ENCODE measurements at regions of chr1 and their contacts with region 1.

Region 1: GRCh38 chr1:66436378-66437145 is 97.4 kb upstream of the SGIP1 start:
- DNase-seq: peak; percentile 62
- H3K4me3 Mint-ChIP-seq: no peak overlapping the region
- H3K27ac Mint-ChIP-seq: peak overlapping the region; percentile 57
- H3K4me1 Mint-ChIP-seq: peaks cover 44% of the 10 kb centered on the region
- H3K27me3 Mint-ChIP-seq: no peaks in the 10 kb centered on the region

Region 2: GRCh38 chr1:66119148-66119547 is 317.4 kb before region 1 on chr1:
- CTCF ChIA-PET with region 1: no interaction called
- POLR2A ChIA-PET with region 1: no interaction called
- DNase-seq: no peak
- H3K4me3 Mint-ChIP-seq: no peak overlapping the region
- H3K27ac Mint-ChIP-seq: no peak overlapping the region
- H3K4me1 Mint-ChIP-seq: no peaks in the 10 kb centered on the region
- H3K27me3 Mint-ChIP-seq: peaks cover 11% of the 10 kb centered on the region

Region 3: GRCh38 chr1:66253330-66253921 is 183.1 kb before region 1 on chr1:
- CTCF ChIA-PET with region 1: interaction called, 422 read pairs
- POLR2A ChIA-PET with region 1: interaction called, 5 read pairs
- DNase-seq: no peak
- H3K4me3 Mint-ChIP-seq: no peak overlapping the region
- H3K27ac Mint-ChIP-seq: no peak overlapping the region
- H3K4me1 Mint-ChIP-seq: peaks cover 74% of the 10 kb centered on the region
- H3K27me3 Mint-ChIP-seq: no peaks in the 10 kb centered on the region

Region 4: DNA sequence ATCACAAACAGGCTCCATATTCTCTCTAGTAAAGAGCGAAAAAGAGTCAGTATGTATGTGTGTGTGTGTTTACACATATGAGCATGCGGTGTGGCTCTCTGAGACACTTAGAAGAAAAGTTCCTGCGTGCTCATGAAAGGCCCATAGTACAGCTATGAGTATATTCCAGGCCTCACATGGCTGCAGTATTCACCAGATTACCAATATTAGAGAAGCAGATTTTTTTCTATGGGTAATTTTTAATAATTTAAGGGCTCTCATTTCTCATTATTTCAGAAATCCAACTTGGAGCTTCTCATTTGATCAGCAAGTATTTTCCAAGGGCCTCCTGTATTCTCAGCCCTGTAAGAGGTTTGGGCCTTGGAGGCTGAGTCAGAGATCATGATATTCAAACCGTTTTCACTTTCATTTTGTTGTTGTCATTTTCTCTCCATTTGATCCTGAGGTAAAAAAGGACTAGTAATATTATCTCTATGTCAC is 135.6 kb before region 1 on chr1:
- CTCF ChIA-PET with region 1: interaction called, 10 read pairs
- POLR2A ChIA-PET with region 1: no interaction called
- DNase-seq: peak; percentile 53
- H3K4me3 Mint-ChIP-seq: peak overlapping the region; percentile 76
- H3K27ac Mint-ChIP-seq: peak overlapping the region; percentile 85
- H3K4me1 Mint-ChIP-seq: peaks cover 49% of the 10 kb centered on the region
- H3K27me3 Mint-ChIP-seq: no peaks in the 10 kb centered on the region

Region 5: DNA sequence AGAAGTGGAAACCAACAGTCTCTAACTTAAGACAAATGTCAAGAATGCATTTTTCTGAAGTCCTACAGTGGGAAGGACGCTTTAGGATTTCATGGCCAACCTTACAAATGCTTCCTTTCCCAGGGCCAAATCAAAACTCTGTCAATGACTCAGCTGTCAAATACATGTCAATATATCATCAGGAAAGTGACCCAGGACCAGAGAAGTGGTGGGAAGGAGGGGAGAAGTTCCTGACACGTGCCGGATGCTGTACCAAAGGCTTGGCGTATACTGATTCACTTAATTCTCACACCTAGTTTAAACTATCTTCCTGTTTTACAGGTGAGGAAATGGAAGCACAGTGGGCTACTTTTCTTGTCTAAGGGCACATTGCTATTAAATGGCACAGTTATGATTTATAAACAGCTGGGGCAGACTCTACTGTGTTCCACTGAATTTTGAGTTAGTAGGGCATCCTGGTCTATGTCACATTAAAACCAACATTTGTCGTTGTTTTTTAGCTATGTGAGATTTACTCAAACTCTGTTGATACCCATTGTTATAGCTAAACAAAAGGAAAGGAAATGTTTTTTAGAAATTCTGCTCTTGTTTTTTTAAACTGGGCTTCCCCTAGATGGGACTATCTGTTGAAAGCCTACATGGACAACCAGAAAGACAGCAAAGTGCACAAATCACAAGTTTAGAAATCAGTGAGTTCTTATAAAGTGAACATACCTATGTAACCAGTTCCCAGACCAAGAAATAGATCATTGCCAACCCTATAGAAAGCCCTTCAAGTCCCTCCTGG is 110.8 kb before region 1 on chr1:
- CTCF ChIA-PET with region 1: no interaction called
- POLR2A ChIA-PET with region 1: no interaction called
- DNase-seq: no peak
- H3K4me3 Mint-ChIP-seq: no peak overlapping the region
- H3K27ac Mint-ChIP-seq: no peak overlapping the region
- H3K4me1 Mint-ChIP-seq: peaks cover 59% of the 10 kb centered on the region
- H3K27me3 Mint-ChIP-seq: peaks cover 2% of the 10 kb centered on the region

Region 6: GRCh38 chr1:66350001-66350547 is 86.5 kb before region 1 on chr1:
- CTCF ChIA-PET with region 1: interaction called, 17 read pairs
- POLR2A ChIA-PET with region 1: interaction called, 9 read pairs
- DNase-seq: peak; percentile 55
- H3K4me3 Mint-ChIP-seq: peak overlapping the region; percentile 66
- H3K27ac Mint-ChIP-seq: peak overlapping the region; percentile 80
- H3K4me1 Mint-ChIP-seq: peaks cover 94% of the 10 kb centered on the region
- H3K27me3 Mint-ChIP-seq: no peaks in the 10 kb centered on the region

Region 7: DNA sequence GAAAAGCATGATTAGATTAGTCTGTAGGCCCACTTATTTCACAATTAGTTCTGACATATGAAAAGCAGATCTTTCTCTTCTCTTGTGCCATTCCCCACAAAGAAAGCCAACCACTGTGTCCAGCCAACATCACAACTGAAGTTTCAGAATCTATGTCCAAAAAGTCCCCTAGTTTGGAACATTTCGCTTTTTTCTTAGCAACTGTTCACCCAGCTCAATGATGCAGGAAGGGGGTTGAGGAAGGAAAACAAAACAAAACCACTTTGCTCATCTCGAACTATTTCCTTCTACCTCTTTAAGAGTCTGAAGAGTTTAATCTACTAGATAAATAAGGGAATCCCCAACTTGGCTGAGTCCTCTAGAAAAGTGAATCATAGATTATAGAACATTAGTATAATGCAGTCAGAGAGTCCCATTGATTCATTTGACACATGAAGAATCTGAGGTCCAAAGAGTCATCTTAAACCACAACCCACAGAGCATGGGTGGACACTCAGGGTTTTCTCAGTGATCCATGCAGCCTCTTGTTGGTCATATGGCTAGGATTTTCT is 61.9 kb before region 1 on chr1:
- CTCF ChIA-PET with region 1: interaction called, 10 read pairs
- POLR2A ChIA-PET with region 1: interaction called, 12 read pairs
- DNase-seq: peak; percentile 33
- H3K4me3 Mint-ChIP-seq: peak overlapping the region; percentile 49
- H3K27ac Mint-ChIP-seq: peak overlapping the region; percentile 87
- H3K4me1 Mint-ChIP-seq: peaks cover 62% of the 10 kb centered on the region
- H3K27me3 Mint-ChIP-seq: no peaks in the 10 kb centered on the region